ENCODE measurements at regions of chr1 and their contacts with region 1.

Region 1: GRCh38 chr1:180178511-180179161 is 24.0 kb downstream of the QSOX1 start:
- DNase-seq: peak in 1 of 2 experiments; percentile 93
- H3K4me3 ChIP-seq: no peak overlapping the region
- H3K27ac ChIP-seq: no peak overlapping the region
- H3K4me1 ChIP-seq: no peaks in the 10 kb centered on the region
- H3K27me3 ChIP-seq: no peaks in the 10 kb centered on the region
- CTCF ChIP-seq: peak; percentile 77 to 94 (median 83)
- EP300 ChIP-seq: no peak
- POLR2A ChIP-seq: no peak
- RAD21 ChIP-seq: peak; percentile 90 to 91

Region 2: GRCh38 chr1:180092931-180093559 is 85.6 kb before region 1 on chr1:
- CTCF ChIA-PET with region 1: interaction called, 10 read pairs
- POLR2A ChIA-PET with region 1: no interaction called
- DNase-seq: no peak
- H3K4me3 ChIP-seq: no peak overlapping the region
- H3K27ac ChIP-seq: no peak overlapping the region
- H3K4me1 ChIP-seq: no peaks in the 10 kb centered on the region
- H3K27me3 ChIP-seq: no peaks in the 10 kb centered on the region
- CTCF ChIP-seq: no peak
- EP300 ChIP-seq: no peak
- POLR2A ChIP-seq: no peak
- RAD21 ChIP-seq: no peak

Region 3: DNA sequence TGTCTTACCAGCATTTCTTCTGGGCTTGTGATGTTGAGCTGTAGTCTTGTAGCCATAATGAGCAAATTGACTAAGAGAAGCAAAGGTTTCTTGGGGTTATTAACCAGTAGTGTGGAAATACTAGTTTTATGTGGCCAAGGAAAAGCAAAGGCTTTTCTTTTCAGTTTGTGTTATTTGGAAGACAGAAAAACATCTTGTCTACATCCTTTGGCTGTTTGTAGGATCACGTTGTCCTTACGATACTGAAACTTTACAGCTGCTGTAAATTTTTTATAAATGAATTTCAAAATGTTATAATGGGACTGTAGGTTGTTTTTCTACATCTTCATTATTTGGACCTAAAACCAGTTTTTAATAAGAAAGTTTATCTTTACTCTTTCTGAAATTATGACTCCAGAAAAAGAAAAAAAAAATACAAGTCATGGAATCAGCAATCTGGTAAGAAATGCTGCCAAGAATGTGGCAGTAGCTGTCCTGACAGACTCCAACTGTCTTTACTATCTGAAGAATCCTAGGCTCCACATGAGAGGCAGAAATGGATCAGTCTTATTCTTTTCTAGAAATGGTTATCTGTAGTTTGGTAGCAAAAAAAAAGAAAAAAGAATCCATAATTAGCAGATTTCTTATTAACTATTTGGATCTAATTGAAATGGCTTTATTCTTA is 65.5 kb before region 1 on chr1:
- CTCF ChIA-PET with region 1: interaction called, 13 read pairs
- POLR2A ChIA-PET with region 1: no interaction called
- DNase-seq: no peak
- H3K4me3 ChIP-seq: no peak overlapping the region
- H3K27ac ChIP-seq: no peak overlapping the region
- H3K4me1 ChIP-seq: no peaks in the 10 kb centered on the region
- H3K27me3 ChIP-seq: no peaks in the 10 kb centered on the region
- CTCF ChIP-seq: no peak
- EP300 ChIP-seq: no peak
- POLR2A ChIP-seq: no peak
- RAD21 ChIP-seq: no peak

Region 4: DNA sequence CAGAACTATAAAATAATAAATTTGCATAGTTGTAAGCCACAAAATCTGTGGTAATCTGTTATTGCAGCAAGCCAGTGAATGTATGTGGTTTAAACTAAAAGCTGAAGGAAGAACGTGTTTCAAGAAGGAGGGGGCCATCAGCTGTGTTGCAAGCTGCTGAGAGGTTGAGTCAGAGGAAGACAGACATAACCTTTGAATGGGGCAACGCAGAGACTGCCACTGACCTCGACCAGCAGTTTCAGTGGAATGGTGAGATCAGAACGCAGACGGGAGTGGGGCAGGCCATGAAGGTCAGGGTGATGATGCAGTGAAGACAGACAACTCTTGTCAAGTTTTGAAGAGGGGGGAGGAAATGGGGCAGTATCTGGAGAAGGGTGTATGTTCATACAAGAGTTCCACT is 47.1 kb before region 1 on chr1:
- CTCF ChIA-PET with region 1: interaction called, 13 read pairs
- POLR2A ChIA-PET with region 1: no interaction called
- DNase-seq: no peak
- H3K4me3 ChIP-seq: no peak overlapping the region
- H3K27ac ChIP-seq: no peak overlapping the region
- H3K4me1 ChIP-seq: peaks cover 0 to 4% (median 0%) of the 10 kb centered on the region in 4 experiments; a peak in 1 of 7 replicates
- H3K27me3 ChIP-seq: no peaks in the 10 kb centered on the region; a peak in 2 of 7 replicates
- CTCF ChIP-seq: no peak
- EP300 ChIP-seq: no peak
- POLR2A ChIP-seq: no peak
- RAD21 ChIP-seq: no peak

Region 5: GRCh38 chr1:180198196-180198595 is 19.6 kb after region 1 on chr1:
- CTCF ChIA-PET with region 1: interaction called, 160 read pairs
- POLR2A ChIA-PET with region 1: no interaction called
- DNase-seq: no peak
- H3K4me3 ChIP-seq: no peak overlapping the region
- H3K27ac ChIP-seq: no peak overlapping the region
- H3K4me1 ChIP-seq: peaks cover 0 to 1% (median 0%) of the 10 kb centered on the region in 4 experiments; a peak in 1 of 7 replicates
- H3K27me3 ChIP-seq: no peaks in the 10 kb centered on the region
- CTCF ChIP-seq: no peak
- EP300 ChIP-seq: no peak
- POLR2A ChIP-seq: no peak
- RAD21 ChIP-seq: no peak

Region 6: DNA sequence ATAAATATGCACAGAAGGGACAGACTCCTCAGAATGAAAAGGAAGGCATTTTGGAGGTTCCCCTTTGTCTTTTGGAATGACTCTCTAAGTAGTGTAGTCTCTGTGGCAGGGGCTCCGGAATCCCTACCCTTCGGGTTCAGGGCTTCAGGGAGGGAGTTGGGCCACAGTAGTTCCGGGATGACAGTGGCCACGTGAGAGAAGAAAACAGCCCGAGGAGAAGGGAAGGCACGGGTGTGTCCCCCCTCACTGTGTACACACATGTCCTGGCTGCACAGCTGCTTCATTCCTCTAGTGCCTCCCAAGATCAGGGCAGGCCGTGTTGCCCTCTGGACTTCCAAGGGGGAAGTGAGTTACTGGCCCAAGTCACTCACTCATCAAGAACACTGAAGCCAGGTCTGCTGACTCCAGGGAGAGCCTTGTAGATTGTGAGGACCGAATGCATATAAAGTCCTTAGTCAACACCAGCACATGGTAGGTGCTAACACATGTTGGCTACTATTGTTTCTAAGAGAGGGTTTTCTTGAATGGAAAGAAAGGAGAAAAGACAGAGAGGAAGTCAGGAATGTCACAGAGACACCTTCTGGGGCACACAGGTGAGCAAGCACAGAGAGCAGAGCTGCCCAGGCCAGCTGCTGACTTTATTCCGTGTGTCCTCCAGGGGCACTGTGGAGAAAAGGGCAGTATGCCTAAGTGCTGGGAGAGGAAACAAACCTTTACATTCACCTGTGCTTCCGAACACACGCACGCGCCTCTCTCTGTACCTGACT is 91.3 kb after region 1 on chr1:
- CTCF ChIA-PET with region 1: interaction called, 12 read pairs
- POLR2A ChIA-PET with region 1: no interaction called
- DNase-seq: peak in 1 of 2 experiments; percentile 63
- H3K4me3 ChIP-seq: no peak overlapping the region
- H3K27ac ChIP-seq: no peak overlapping the region
- H3K4me1 ChIP-seq: peaks cover 15 to 48% (median 31%) of the 10 kb centered on the region in 4 experiments
- H3K27me3 ChIP-seq: no peaks in the 10 kb centered on the region; a peak in 1 of 7 replicates
- CTCF ChIP-seq: peak; percentile 50 to 85 (median 82)
- EP300 ChIP-seq: no peak
- POLR2A ChIP-seq: no peak
- RAD21 ChIP-seq: peak; percentile 46 to 60

Measured in H1 (cell line).